Body of pancreas (tissue), 4 donors: ENCODE measurements at regions of chr14 and their contacts with region 1.

Region 1: DNA sequence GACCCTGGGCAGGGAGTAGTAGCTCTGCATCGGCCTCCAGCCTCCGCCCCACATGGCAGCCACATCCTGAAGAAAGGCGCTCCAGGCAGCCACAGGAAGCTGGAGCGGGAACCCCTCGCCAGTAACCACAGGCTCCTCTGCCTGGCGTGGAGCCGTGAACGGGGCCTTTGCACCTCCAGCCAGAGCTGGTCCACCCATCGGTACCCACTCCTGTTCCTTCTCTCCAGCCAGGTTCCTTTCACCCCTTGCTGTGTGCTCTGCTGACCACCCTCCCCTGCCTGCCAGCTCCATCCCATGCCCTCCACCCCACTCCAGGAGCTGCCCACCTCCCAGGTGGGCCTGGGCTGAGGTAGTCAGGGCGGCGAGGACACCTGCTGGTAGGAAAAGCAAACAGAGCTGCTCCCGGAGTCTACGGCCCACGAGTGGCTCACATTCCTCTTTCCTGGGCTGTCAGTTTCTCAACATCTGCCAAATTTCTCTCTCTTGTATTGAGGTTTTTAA is 2.7 kb downstream of the TGFB3 start:
- DNase-seq: peak; percentile 29 to 50 (median 41)
- ATAC-seq: no peak
- H3K4me3 ChIP-seq: no peak overlapping the region
- H3K27ac ChIP-seq: peak overlapping the region in 1 of 4 donors; percentile 97
- H3K4me1 ChIP-seq: peaks cover 60% of the 10 kb centered on the region
- H3K27me3 ChIP-seq: no peaks in the 10 kb centered on the region
- CTCF ChIP-seq: peak in 6 of 7 experiments; percentile 22 to 63 (median 57)
- POLR2A ChIP-seq: no peak

Region 2: GRCh38 chr14:75577729-75578101 is 401.4 kb before region 1 on chr14:
- intact Hi-C with region 1: loop called (anchors 10 kb)
- DNase-seq: peak; percentile 85 to 91 (median 89)
- ATAC-seq: peak; percentile 90
- H3K4me3 ChIP-seq: peak overlapping the region; percentile 10 to 41
- H3K27ac ChIP-seq: peak overlapping the region in 3 of 4 donors; percentile 55 to 81 (median 68)
- H3K4me1 ChIP-seq: peaks cover 18% of the 10 kb centered on the region
- H3K27me3 ChIP-seq: no peaks in the 10 kb centered on the region
- CTCF ChIP-seq: peak; percentile 63 to 81 (median 78)
- POLR2A ChIP-seq: no peak

Region 3: DNA sequence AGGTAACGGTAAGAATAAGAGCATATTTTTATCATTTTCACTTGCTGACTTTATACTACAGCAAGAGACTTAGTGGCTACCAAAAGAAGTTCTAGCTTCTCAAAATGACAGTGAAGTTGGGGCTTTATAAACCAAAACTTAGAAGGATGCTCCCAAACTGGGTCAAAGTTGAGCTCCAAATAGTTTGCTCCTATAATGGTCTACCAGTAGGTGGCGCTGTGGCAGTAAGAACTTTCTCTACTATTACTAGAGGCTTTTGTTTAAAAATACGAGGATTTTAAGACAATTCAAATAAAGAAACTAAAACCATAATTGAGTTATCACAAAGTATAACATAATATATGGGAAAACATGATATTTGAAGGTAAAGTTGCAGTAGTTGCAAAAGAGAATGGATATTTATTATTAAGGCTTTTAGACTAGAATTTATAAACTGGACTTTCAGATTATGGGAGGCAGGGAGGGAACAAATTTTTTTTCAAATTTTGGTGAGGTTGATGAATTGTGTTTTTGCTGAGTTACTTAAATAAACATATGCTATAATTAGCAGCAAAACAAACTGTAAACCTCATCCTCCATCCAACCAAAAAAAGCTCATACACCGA is 72.3 kb before region 1 on chr14:
- intact Hi-C with region 1: loop called (anchors 5 kb)
- DNase-seq: peak; percentile 65 to 74 (median 68)
- ATAC-seq: peak; percentile 60
- H3K4me3 ChIP-seq: no peak overlapping the region
- H3K27ac ChIP-seq: no peak overlapping the region
- H3K4me1 ChIP-seq: no peaks in the 10 kb centered on the region
- H3K27me3 ChIP-seq: no peaks in the 10 kb centered on the region
- CTCF ChIP-seq: peak; percentile 69 to 95 (median 84)
- POLR2A ChIP-seq: no peak